Pancreas (tissue), 10 donors: ENCODE measurements at regions of chr18 and their contacts with region 1.

Region 1: DNA sequence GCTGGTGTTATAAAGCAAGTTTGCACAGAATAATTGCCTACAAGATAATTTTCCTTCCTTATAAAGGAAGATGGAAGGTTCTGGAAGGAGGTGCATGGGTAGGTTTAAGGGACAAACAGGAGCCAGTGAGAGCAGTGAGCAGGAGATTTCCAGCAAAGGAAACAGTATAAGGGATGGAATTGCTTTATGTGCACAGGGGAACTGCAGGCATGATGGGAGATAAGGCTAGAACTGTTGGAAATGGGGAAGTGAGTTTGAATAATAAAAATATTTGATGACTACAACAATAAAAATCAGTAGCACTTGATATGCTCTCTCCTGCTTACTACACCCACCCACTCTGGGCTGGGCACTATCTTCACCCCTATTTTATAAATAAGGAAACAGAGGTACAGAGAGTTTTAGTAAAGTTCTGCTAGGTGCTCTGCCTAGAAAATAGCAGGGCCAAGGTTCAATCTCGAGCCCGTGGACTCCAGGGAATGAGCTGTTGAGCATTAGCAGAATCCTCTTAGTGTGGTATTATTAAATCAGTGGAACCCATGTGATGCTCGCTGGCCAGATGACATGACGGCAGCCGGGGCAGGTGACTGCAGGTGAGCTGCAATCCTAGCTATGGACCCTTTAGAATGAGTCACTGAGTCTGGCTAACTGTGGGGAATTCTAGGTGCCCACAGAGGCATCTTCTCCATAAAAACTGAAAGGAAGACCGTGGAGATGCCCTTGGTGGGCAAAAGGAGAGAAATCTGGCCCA is 302.5 kb downstream of the PIEZO2 start:
- DNase-seq: no peak
- ATAC-seq: no peak
- H3K4me3 ChIP-seq: no peak overlapping the region
- H3K27ac ChIP-seq: no peak overlapping the region
- H3K4me1 ChIP-seq: no peaks in the 10 kb centered on the region
- H3K27me3 ChIP-seq: no peaks in the 10 kb centered on the region
- CTCF ChIP-seq: no peak

Region 2: GRCh38 chr18:10705786-10706185 is 141.0 kb before region 1 on chr18:
- intact Hi-C with region 1: no loop called
- DNase-seq: no peak
- ATAC-seq: no peak
- H3K4me3 ChIP-seq: no peak overlapping the region
- H3K27ac ChIP-seq: no peak overlapping the region
- H3K4me1 ChIP-seq: no peaks in the 10 kb centered on the region
- H3K27me3 ChIP-seq: no peaks in the 10 kb centered on the region
- CTCF ChIP-seq: no peak

Region 3: GRCh38 chr18:11047156-11047555 is 200.3 kb after region 1 on chr18:
- intact Hi-C with region 1: loop called in 1 of 3 experiments (anchors 5 kb)
- DNase-seq: no peak
- ATAC-seq: no peak
- H3K4me3 ChIP-seq: no peak overlapping the region
- H3K27ac ChIP-seq: no peak overlapping the region
- H3K4me1 ChIP-seq: no peaks in the 10 kb centered on the region
- H3K27me3 ChIP-seq: no peaks in the 10 kb centered on the region
- CTCF ChIP-seq: no peak

Region 4: GRCh38 chr18:11064106-11064505 is 217.3 kb after region 1 on chr18:
- intact Hi-C with region 1: no loop called
- DNase-seq: no peak
- ATAC-seq: no peak
- H3K4me3 ChIP-seq: no peak overlapping the region
- H3K27ac ChIP-seq: no peak overlapping the region
- H3K4me1 ChIP-seq: no peaks in the 10 kb centered on the region
- H3K27me3 ChIP-seq: no peaks in the 10 kb centered on the region
- CTCF ChIP-seq: no peak